ENCODE measurements at regions of chr16 and their contacts with region 1.

Region 1: GRCh38 chr16:17211797-17212196 is 259.0 kb downstream of the XYLT1 start:
- DNase-seq: no peak
- ATAC-seq: peak; percentile 60; the same call in 1 of the 2 replicates
- H3K4me3 ChIP-seq: no peak overlapping the region
- H3K27ac ChIP-seq: no peak overlapping the region
- H3K4me1 ChIP-seq: no peaks in the 10 kb centered on the region
- H3K27me3 ChIP-seq: peaks cover 4% of the 10 kb centered on the region; the same call in 1 of the 2 replicates
- CTCF ChIP-seq: peak; percentile 44

Region 2: DNA sequence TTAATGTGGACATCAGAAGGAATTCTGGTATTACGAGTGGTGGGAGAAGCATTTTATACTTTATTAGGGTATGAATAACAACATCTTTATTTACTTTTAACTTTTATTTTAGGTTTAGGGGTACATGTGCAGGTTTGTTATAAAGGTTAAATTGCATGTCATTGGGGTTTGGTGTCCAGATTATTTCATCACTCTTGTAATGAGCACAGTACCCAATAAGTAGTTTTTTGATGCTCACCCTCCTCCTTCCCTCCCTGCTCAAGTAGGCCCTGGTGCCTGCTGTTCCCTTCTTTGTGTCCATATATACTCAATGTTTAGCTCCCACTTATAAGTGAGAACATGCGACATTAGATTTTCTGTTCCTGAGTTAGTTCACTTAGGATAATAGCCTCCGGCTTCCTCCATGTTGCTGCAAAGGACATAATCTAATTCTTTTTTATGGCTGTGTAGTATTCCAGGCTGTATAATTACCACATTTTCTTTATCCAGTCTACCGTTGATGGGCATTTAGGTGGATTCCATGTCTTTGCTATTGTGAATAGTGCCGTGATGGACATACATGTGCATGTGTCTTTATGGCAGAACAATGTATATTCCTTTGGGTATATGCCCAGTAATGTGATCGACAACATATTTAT is 197.2 kb before region 1 on chr16:
- CTCF ChIA-PET with region 1: interaction called, 16 read pairs
- POLR2A ChIA-PET with region 1: no interaction called
- in situ Hi-C with region 1: no loop called
- intact Hi-C with region 1: no loop called
- DNase-seq: no peak
- ATAC-seq: no peak
- H3K4me3 ChIP-seq: no peak overlapping the region
- H3K27ac ChIP-seq: no peak overlapping the region
- H3K4me1 ChIP-seq: no peaks in the 10 kb centered on the region
- H3K27me3 ChIP-seq: no peaks in the 10 kb centered on the region
- CTCF ChIP-seq: no peak

Region 3: GRCh38 chr16:17083628-17084027 is 128.2 kb before region 1 on chr16:
- CTCF ChIA-PET with region 1: no interaction called
- POLR2A ChIA-PET with region 1: no interaction called
- in situ Hi-C with region 1: no loop called
- intact Hi-C with region 1: no loop called
- DNase-seq: no peak
- ATAC-seq: no peak
- H3K4me3 ChIP-seq: no peak overlapping the region
- H3K27ac ChIP-seq: no peak overlapping the region
- H3K4me1 ChIP-seq: no peaks in the 10 kb centered on the region
- H3K27me3 ChIP-seq: peaks cover 3% of the 10 kb centered on the region; the same call in 1 of the 2 replicates
- CTCF ChIP-seq: no peak

Measured in Panc1 (cell line).